Transverse colon (tissue), 4 donors: ENCODE measurements at regions of chr10 and their contacts with region 1.

Region 1: DNA sequence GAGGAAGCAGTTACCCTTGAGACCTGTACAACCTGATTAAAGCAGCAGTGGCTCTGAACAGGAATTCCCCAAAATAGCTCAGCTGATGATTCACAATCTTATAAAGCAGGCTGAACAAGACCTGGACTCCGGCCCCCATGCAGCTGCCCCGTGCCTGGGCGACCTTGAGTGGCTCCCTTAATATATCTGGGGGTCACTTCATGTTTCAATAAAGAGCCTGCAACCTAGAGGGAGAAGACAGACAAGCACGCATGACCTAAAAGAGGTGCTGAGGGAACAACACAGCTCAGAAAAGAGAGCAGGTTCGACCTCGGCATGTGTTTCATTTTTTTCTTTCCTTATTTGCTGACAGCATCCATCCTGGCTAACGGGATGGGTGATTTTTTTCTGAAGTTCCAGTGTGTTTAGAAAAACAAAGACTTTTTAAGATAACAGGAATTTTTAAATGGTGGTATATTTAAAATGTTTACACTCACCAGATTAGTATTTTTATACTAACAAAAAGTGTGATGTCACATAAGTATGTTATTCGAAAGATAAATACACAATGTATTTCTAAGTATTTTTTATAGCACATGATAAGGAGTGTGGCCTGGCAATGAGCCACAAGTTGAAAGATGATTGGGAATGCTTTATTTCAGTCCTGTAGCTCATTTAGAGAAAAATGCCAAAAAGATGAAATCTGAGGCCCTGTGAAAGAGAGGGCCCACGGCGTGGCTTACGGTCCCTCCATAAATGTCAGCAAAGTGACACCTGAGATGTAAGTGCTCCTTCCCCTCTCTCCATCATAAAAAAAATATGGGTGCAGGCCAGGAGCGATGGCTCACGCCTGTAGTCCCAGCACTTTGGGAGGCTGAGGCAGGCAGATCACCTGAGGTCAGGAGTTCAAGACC is 161.3 kb downstream of the SLIT1 start:
- DNase-seq: no peak
- H3K4me3 ChIP-seq: no peak overlapping the region
- H3K27ac ChIP-seq: peak overlapping the region in 2 of 4 donors; percentile 20 to 21
- H3K4me1 ChIP-seq: peaks cover 13 to 19% (median 16%) of the 10 kb centered on the region in 4 donors
- H3K27me3 ChIP-seq: no peaks in the 10 kb centered on the region
- CTCF ChIP-seq: no peak
- EP300 ChIP-seq: no peak
- POLR2A ChIP-seq: no peak

Region 2: GRCh38 chr10:96642973-96643372 is 381.5 kb before region 1 on chr10:
- in situ Hi-C with region 1: loop called in 1 of 4 experiments (anchors 25 kb)
- intact Hi-C with region 1: no loop called
- DNase-seq: peak; percentile 80
- H3K4me3 ChIP-seq: no peak overlapping the region
- H3K27ac ChIP-seq: no peak overlapping the region
- H3K4me1 ChIP-seq: peaks cover 0 to 17% (median 0%) of the 10 kb centered on the region in 4 donors
- H3K27me3 ChIP-seq: no peaks in the 10 kb centered on the region
- CTCF ChIP-seq: peak; percentile 43 to 56 (median 53)
- EP300 ChIP-seq: no peak
- POLR2A ChIP-seq: no peak